Calu3 (cell line): ENCODE measurements at regions of chr1 and their contacts with region 1.

Region 1: GRCh38 chr1:207240325-207241095 is 81.0 kb upstream of the CD55 start:
- DNase-seq: peak; percentile 32
- H3K4me3 Mint-ChIP-seq: peak overlapping the region; percentile 56
- H3K27ac Mint-ChIP-seq: peak overlapping the region; percentile 97
- H3K4me1 Mint-ChIP-seq: peaks cover 55% of the 10 kb centered on the region
- H3K27me3 Mint-ChIP-seq: no peaks in the 10 kb centered on the region
- CTCF ChIP-seq: no peak

Region 2: DNA sequence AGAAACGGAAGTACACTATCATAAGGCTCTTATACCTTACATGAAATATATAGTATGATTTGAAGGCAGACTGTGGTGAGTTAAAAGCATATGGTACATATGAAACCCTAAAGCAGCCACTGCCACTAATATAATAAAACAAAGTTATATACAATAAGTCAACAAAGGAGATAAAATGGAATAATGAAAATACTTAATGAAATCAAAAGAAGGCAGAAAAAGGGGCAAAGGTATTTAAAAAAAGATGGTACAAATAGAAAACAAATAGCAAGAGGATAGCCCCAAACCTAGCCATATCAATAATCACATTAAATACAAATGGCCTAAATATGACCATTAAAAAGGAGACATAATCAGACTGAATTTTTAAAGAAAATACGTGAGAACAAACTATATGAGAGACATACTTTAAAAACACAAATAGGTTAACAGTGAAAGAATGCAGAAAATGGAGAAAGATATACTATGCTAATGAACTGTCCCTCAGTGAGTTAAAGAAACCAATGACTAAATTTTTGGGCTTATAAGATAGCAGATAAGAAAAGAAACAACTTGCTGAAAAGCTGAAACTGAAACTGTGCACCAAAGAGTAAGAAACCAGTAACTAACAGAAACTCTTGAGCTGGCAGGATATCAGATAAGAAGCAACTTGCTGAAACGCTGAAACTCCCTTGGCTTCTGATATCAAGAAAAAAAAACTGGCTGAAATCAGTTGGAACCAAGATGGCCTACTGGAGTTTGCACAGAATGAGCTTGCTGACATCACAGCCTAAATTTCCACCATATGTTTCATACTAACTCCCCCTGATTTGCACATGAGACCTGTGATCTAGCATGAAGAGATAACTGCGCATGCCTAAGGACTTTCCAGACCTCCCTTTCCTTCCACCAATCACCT is 423.9 kb before region 1 on chr1:
- CTCF ChIA-PET with region 1: no interaction called
- intact Hi-C with region 1: no loop called
- DNase-seq: no peak
- H3K4me3 Mint-ChIP-seq: no peak overlapping the region
- H3K27ac Mint-ChIP-seq: no peak overlapping the region
- H3K4me1 Mint-ChIP-seq: no peaks in the 10 kb centered on the region
- H3K27me3 Mint-ChIP-seq: peaks cover 67% of the 10 kb centered on the region
- CTCF ChIP-seq: no peak

Region 3: DNA sequence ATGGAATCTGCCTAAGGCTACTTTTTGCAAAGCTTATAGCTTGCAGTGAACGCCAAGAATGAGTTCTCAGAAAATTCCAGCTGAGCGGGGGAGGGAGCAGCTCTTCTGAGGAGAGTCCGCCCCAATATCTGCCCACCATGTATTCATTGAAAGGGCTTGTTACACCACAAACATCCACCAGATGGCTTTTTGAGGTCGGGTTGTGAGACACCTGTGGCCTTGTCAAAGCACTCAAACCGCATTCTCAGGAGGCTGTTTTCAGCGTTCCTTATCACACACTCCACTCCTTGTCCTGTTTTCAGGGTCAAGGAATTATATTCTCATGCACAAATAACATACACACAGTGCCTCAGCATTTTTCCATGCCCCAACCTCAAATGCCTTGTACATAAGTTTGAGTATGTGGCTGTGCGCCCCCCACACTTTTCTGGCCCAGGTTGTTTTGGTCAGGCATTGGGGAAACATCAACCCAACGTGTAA is 155.8 kb before region 1 on chr1:
- CTCF ChIA-PET with region 1: no interaction called
- intact Hi-C with region 1: loop called (anchors 5 kb)
- DNase-seq: peak; percentile 76
- H3K4me3 Mint-ChIP-seq: no peak overlapping the region
- H3K27ac Mint-ChIP-seq: no peak overlapping the region
- H3K4me1 Mint-ChIP-seq: peaks cover 38% of the 10 kb centered on the region
- H3K27me3 Mint-ChIP-seq: no peaks in the 10 kb centered on the region
- CTCF ChIP-seq: peak; percentile 79

Region 4: DNA sequence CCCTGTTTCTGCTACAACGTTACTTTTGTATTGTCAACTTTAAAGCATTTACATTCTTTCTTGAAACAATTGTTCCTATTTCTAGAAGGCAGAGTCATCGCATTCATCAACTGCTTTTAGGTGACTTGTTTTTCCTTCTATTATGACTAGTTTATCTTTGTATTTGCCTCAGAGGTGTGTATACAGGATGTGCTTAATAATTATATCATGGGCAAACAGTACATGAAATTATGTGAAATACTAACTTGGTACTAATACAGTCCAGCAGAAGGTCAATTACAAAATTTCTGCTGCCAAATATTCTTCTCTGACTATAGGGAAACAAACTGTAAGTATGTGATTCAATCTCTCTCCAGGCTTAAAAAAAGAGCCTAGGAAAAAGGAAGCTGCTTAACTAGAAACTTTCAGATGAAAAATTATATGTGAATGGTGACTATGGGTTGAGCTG is 34.9 kb before region 1 on chr1:
- CTCF ChIA-PET with region 1: no interaction called
- intact Hi-C with region 1: loop called (anchors 1 kb)
- DNase-seq: no peak
- H3K4me3 Mint-ChIP-seq: peak overlapping the region; percentile 36
- H3K27ac Mint-ChIP-seq: peak overlapping the region; percentile 87
- H3K4me1 Mint-ChIP-seq: peaks cover 17% of the 10 kb centered on the region
- H3K27me3 Mint-ChIP-seq: no peaks in the 10 kb centered on the region
- CTCF ChIP-seq: no peak

Region 5: GRCh38 chr1:207298653-207299346 is 58.3 kb after region 1 on chr1:
- CTCF ChIA-PET with region 1: no interaction called
- intact Hi-C with region 1: loop called (anchors 2 kb)
- DNase-seq: no peak
- H3K4me3 Mint-ChIP-seq: no peak overlapping the region
- H3K27ac Mint-ChIP-seq: peak overlapping the region; percentile 46
- H3K4me1 Mint-ChIP-seq: peaks cover 45% of the 10 kb centered on the region
- H3K27me3 Mint-ChIP-seq: no peaks in the 10 kb centered on the region
- CTCF ChIP-seq: no peak